Dorsolateral prefrontal cortex (tissue), 120 donors: ENCODE measurements at regions of chr21 and their contacts with region 1.

Region 1: DNA sequence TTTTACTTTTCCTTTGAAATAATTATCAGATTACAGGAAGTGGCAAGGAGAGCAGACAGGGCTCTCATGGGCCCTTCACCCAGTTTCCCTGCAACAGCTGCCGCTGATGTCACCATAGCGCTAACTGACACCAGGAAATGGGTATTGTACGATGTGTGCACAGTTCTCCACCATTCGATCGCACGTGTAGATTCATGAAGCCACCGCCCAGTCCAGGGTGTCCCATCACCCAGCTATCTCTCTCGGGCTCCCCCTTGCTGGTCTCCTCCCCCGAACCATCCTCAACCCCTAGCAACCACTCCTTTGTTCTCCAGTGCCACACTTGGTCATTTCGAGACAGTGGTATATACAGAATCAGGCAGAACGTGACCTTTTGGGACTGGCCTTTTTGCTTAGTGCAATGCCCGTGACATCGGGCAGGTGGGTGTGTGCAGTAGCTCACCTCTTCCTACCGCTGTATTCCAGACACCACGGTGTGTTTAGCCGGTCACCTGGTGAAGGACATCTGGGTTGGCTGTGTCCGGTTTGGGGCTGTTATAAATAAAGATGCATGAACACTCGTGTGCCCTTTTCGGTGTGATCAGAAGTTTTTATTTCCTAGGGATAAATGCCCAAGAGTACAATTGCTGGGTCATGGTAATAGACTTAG is 118.4 kb downstream of the CRYAA start:
- DNase-seq: no peak
- H3K4me3 ChIP-seq: no peak overlapping the region
- H3K27ac ChIP-seq: no peak overlapping the region
- H3K27me3 ChIP-seq: no peaks in the 10 kb centered on the region
- CTCF ChIP-seq: no peak

Region 2: GRCh38 chr21:43269440-43269839 is 17.8 kb before region 1 on chr21:
- intact Hi-C with region 1: no loop called
- DNase-seq: peak in 1 of 10 donors; percentile 37
- H3K4me3 ChIP-seq: no peak overlapping the region
- H3K27ac ChIP-seq: no peak overlapping the region
- H3K27me3 ChIP-seq: peaks cover 0 to 4% (median 0%) of the 10 kb centered on the region in 45 donors
- CTCF ChIP-seq: peak in 6 of 56 donors; percentile 7 to 22 (median 12)

Region 3: GRCh38 chr21:43303275-43304178 is 16.3 kb after region 1 on chr21:
- intact Hi-C with region 1: loop called in 1 of 2 experiments (anchors 1 kb)
- DNase-seq: peak in 1 of 10 donors; percentile 36
- H3K4me3 ChIP-seq: no peak overlapping the region
- H3K27ac ChIP-seq: no peak overlapping the region
- H3K27me3 ChIP-seq: no peaks in the 10 kb centered on the region
- CTCF ChIP-seq: no peak